GM12878 (cell line): ENCODE measurements at regions of chr15 and their contacts with region 1.

Region 1: DNA sequence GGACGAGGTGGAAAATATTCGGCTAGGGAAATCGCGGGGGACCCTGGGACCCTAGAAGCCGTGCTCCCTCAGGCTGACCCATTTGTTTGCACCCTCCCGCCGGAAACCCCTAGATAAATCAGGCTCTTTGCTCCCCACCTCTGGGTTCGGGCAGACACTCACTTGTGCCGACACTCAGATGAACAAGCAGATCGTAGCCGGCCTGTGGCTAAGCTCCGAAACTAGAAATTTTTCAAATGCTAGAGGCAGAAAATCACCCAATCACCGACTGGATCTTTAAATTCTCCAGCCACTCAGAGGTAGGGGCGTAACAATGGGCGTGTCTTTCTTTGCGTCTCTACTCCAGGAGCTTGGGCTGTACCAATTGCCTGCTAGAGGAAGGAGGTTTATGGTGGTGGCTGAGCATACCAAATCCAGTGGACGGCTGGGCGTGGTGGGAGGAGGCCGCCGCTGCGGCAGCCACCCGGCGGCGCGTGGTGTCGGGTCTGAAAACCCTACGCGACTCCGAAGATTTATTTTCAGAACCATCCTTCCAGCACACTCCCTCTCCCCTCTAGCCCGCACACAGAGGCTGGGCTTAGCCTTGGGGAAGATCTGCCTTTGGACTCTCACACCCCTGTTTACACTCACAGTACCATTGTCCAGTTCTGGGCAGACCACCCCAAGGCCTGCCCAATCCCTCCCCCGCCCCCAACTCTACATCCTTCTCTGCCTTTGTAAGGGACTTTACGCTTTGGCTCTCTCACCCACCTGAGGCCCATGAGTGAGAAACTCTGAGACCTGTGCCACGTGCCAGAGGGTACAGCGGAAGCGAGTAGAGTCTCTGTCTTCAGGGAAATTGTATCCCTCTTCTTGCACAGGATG is at the start of gene PIF1:
- DNase-seq: peak; percentile 98
- ATAC-seq: peak; percentile 93
- H3K4me3 ChIP-seq: peak within 1 kb of the TSS; percentile 88
- H3K27ac ChIP-seq: peak within 1 kb of the TSS; percentile 85
- H3K4me1 ChIP-seq: peaks cover 14% of the 10 kb centered on the region
- H3K27me3 ChIP-seq: no peaks in the 10 kb centered on the region
- CTCF ChIP-seq: peak in 1 of 3 experiments; percentile 9; a peak in 1 of 6 replicates
- EP300 ChIP-seq: peak in 1 of 2 experiments; percentile 34; a peak in 1 of 4 replicates
- POLR2A ChIP-seq: peak; percentile 88
- RAD21 ChIP-seq: no peak
- polyA plus RNA-seq, gene PIF1: 3.7 to 7.2 TPM

Region 2: DNA sequence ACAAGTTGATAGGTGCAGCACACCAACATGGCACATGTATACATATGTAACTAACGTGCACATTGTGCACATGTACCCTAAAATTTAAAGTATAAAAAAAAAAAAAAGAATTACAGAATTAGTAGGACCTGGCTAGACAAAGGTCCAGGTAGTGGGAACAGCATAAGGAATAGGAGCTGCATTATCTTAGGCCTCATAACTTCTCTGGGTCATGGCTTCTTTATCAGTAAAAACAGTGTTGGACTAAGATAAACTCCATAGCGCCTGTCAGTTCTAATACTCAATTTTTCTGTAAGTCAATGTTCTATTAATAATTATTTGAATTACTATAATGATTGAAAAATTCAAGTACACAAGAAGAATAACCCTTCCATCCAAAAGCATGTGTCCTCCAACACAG is 1090.2 kb before region 1 on chr15:
- CTCF ChIA-PET with region 1: no interaction called
- POLR2A ChIA-PET with region 1: no interaction called
- RAD21 ChIA-PET with region 1: no interaction called
- SMC1A ChIA-PET with region 1: no interaction called
- in situ Hi-C with region 1: no loop called
- intact Hi-C with region 1: no loop called
- DNase-seq: no peak
- ATAC-seq: no peak
- H3K4me3 ChIP-seq: no peak overlapping the region
- H3K27ac ChIP-seq: no peak overlapping the region
- H3K4me1 ChIP-seq: no peaks in the 10 kb centered on the region
- H3K27me3 ChIP-seq: no peaks in the 10 kb centered on the region
- CTCF ChIP-seq: no peak
- EP300 ChIP-seq: no peak
- POLR2A ChIP-seq: no peak
- RAD21 ChIP-seq: no peak

Region 3: DNA sequence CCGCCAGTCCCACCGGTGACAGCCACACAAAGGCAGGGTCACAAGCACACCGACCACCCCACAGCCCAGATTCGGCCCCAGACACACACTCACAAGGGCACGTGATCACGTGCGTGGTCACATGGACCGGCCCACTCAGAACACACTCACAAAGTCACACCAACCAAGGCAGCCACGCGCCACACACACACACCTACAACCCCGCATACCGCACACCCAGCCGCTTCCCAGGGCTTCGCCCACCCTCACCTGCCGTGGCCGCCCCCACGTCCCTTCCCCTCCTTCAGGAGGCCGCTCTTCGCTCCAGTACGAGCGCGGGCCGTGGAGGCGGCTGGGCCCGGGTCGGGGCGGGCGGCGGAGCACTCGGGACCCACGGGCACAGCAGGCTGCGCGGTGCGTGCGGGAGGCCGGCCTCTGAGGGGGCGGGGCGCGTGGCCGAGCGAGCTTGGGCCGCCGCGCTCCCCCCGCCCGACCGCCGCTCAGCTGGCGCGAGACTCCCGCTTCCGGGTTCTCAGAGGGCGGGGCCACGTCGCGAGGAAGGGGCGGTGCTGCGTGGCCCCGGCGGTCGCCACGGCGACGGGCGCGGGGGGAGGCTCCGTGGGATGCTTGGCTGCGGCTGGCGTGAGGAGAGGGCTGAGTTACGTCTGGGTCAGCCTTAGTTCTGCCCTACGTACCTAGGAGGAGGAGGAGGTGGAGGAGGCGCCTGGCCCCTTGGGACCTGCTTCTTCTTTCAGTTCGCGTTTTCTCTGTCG is 163.9 kb after region 1 on chr15 and contains the start of gene SPG21:
- CTCF ChIA-PET with region 1: no interaction called
- POLR2A ChIA-PET with region 1: interaction called, 3 read pairs
- RAD21 ChIA-PET with region 1: interaction called, 3 read pairs
- SMC1A ChIA-PET with region 1: no interaction called
- in situ Hi-C with region 1: no loop called
- intact Hi-C with region 1: loop called (anchors 10 kb)
- DNase-seq: peak; percentile 91
- ATAC-seq: peak; percentile 95
- H3K4me3 ChIP-seq: peak within 1 kb of the TSS; percentile 82
- H3K27ac ChIP-seq: peak within 1 kb of the TSS; percentile 92
- H3K4me1 ChIP-seq: peaks cover 4% of the 10 kb centered on the region
- H3K27me3 ChIP-seq: no peaks in the 10 kb centered on the region
- CTCF ChIP-seq: no peak
- EP300 ChIP-seq: peak in 1 of 2 experiments; percentile 84; a peak in 2 of 4 replicates
- POLR2A ChIP-seq: peak; percentile 85
- RAD21 ChIP-seq: no peak
- polyA plus RNA-seq, gene SPG21: 25.5 to 29.6 TPM

Region 4: GRCh38 chr15:65292938-65293518 is 467.4 kb after region 1 on chr15:
- CTCF ChIA-PET with region 1: no interaction called
- POLR2A ChIA-PET with region 1: no interaction called
- RAD21 ChIA-PET with region 1: no interaction called
- SMC1A ChIA-PET with region 1: no interaction called
- in situ Hi-C with region 1: no loop called
- intact Hi-C with region 1: loop called (anchors 10 kb)
- DNase-seq: no peak
- ATAC-seq: no peak
- H3K4me3 ChIP-seq: no peak overlapping the region
- H3K27ac ChIP-seq: no peak overlapping the region
- H3K4me1 ChIP-seq: peaks cover 6% of the 10 kb centered on the region
- H3K27me3 ChIP-seq: no peaks in the 10 kb centered on the region
- CTCF ChIP-seq: no peak
- EP300 ChIP-seq: no peak
- POLR2A ChIP-seq: no peak
- RAD21 ChIP-seq: no peak